ENCODE measurements at regions of chr7 and their contacts with region 1.

Region 1: GRCh38 chr7:95545078-95545498 is 51.2 kb downstream of the PDK4 start:
- DNase-seq: no peak
- ATAC-seq: peak; percentile 47; the same call in 1 of the 3 replicates
- H3K4me3 ChIP-seq: no peak overlapping the region
- H3K27ac ChIP-seq: no peak overlapping the region
- H3K4me1 ChIP-seq: no peaks in the 10 kb centered on the region
- H3K27me3 ChIP-seq: no peaks in the 10 kb centered on the region; a peak in 1 of 4 replicates
- CTCF ChIP-seq: peak; percentile 14 to 38 (median 32); a peak in 4 of 6 replicates
- EP300 ChIP-seq: no peak
- POLR2A ChIP-seq: no peak
- RAD21 ChIP-seq: peak; percentile 48

Region 2: GRCh38 chr7:95396136-95397032 is 148.7 kb before region 1 on chr7 and contains the start of gene PON3:
- CTCF ChIA-PET with region 1: no interaction called
- POLR2A ChIA-PET with region 1: no interaction called
- RAD21 ChIA-PET with region 1: no interaction called
- SMC1A ChIA-PET with region 1: no interaction called
- in situ Hi-C with region 1: no loop called
- intact Hi-C with region 1: no loop called
- DNase-seq: no peak
- ATAC-seq: peak; percentile 76
- H3K4me3 ChIP-seq: no peak within 1 kb of the TSS
- H3K27ac ChIP-seq: no peak within 1 kb of the TSS
- H3K4me1 ChIP-seq: no peaks in the 10 kb centered on the region
- H3K27me3 ChIP-seq: peaks cover 0 to 6% of the 10 kb centered on the region in 2 experiments; a peak in 2 of 4 replicates
- CTCF ChIP-seq: peak; percentile 24 to 48 (median 26); a peak in 4 of 6 replicates
- EP300 ChIP-seq: no peak
- POLR2A ChIP-seq: no peak
- RAD21 ChIP-seq: peak; percentile 32; the same call in 1 of the 2 replicates
- polyA plus RNA-seq, gene PON3: 1.4 to 2.0 TPM

Region 3: DNA sequence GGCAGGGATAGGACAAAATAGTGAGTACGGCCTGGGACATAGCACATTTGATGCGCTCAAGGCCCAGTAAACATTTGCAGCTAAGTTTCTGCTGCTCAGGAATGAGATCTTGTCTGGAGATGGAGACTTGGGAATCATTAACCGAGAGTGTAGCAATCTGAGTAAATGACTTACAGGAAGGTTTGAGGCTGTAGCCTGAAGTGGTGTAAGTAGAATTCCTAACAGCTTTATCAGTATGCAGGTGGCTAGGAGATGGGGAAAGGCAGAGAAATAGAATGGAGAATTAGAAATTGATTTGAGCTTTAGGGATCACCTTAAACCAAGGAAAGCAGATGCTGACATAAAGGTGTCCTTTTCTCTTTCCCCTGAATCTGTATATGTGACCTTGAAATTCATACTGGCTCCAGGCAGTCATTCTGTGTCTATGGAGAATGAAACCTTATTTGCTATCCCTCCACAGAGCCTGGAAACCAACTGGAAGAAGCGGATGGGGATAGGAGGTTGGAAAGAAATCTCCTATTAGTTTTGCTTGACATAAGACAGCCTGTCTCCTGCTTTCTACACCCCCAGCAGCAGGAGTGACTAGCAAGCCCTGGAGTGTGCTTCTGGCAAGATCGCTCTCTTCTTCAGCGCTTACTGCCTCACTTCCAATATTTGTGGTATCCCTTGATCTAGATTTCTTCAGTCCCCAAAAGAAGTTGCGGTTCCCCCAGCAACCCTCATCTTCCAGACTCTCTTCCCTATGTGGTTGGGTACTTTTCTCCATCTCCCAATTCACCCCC is 103.9 kb before region 1 on chr7:
- CTCF ChIA-PET with region 1: no interaction called
- POLR2A ChIA-PET with region 1: no interaction called
- RAD21 ChIA-PET with region 1: no interaction called
- SMC1A ChIA-PET with region 1: no interaction called
- in situ Hi-C with region 1: no loop called
- intact Hi-C with region 1: no loop called
- DNase-seq: no peak
- ATAC-seq: no peak
- H3K4me3 ChIP-seq: no peak overlapping the region
- H3K27ac ChIP-seq: no peak overlapping the region
- H3K4me1 ChIP-seq: no peaks in the 10 kb centered on the region
- H3K27me3 ChIP-seq: no peaks in the 10 kb centered on the region
- CTCF ChIP-seq: no peak
- EP300 ChIP-seq: no peak
- POLR2A ChIP-seq: no peak
- RAD21 ChIP-seq: no peak

Region 4: DNA sequence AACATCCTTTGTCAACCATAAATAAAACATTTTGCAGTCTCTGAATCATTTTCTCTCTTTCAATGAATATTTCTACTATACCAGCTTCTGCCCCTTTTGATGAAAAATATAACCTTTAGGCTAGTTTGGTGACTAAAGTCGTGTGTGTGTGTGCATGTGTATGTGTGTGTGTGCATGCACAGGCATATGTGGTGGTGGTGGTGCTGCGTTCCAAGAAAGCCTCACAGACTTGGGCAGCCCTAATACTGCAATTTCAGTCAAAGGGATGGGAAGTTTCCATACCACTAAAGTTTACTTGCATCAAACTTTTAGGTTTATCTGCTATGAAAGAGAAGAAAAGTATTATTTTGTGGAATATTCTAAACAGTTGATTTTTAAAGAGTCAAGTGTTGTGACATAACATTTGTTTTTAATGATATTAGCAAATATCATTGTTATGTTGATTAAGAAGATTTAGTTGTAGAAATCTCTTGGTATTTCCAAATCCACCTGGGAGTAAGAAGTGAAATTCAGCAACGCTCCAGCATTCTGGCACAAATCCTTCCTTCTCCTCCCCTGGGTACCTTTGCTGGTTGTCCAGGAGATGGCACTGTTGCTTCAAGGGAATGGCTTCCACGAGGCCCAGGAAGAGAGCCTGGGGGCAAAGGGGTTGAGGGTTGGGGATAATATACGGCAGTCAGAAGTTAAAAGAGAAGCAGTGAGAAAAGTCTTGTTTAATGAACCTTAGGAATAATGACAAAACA is 17.9 kb before region 1 on chr7:
- CTCF ChIA-PET with region 1: interaction called, 35 read pairs
- POLR2A ChIA-PET with region 1: interaction called, 4 read pairs
- RAD21 ChIA-PET with region 1: interaction called, 10 read pairs
- SMC1A ChIA-PET with region 1: interaction called, 22 read pairs
- in situ Hi-C with region 1: no loop called
- intact Hi-C with region 1: no loop called
- DNase-seq: no peak
- ATAC-seq: peak; percentile 92
- H3K4me3 ChIP-seq: no peak overlapping the region
- H3K27ac ChIP-seq: no peak overlapping the region
- H3K4me1 ChIP-seq: no peaks in the 10 kb centered on the region
- H3K27me3 ChIP-seq: no peaks in the 10 kb centered on the region
- CTCF ChIP-seq: peak; percentile 73 to 83 (median 82)
- EP300 ChIP-seq: no peak
- POLR2A ChIP-seq: no peak
- RAD21 ChIP-seq: peak; percentile 96

Measured in GM12878 (cell line).